PC-9 (cell line): ENCODE measurements at regions of chr2 and their contacts with region 1.

Region 1: DNA sequence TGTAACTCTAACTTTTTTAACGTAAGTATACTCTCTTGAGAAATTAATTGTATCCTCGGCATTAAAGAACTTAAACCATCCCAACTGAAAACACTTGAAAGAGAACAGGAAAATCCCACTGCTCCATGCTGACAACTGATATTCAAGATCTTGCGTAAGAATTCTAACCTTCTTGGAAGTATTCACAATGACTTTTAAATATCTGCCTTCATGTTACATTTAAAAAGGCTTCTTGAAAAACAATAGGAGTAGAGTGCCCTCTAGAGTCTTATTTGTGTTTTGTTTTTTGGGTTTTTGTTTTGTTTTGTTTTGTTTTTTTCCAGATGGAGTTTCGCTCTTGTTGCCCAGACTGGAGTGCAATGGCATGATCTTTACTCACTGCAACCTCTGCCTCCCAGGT is 65.4 kb upstream of the DNAJC10 start:
- DNase-seq: peak in 1 of 2 experiments; percentile 74
- H3K4me3 ChIP-seq: no peak overlapping the region
- H3K27ac ChIP-seq: no peak overlapping the region
- H3K4me1 ChIP-seq: no peaks in the 10 kb centered on the region
- H3K27me3 ChIP-seq: no peaks in the 10 kb centered on the region
- CTCF ChIP-seq: peak; percentile 85

Region 2: GRCh38 chr2:181104512-181105115 is 1546.1 kb before region 1 on chr2:
- CTCF ChIA-PET with region 1: no interaction called
- POLR2A ChIA-PET with region 1: no interaction called
- intact Hi-C with region 1: loop called (anchors 10 kb)
- DNase-seq: peak in 1 of 2 experiments; percentile 28
- H3K4me3 ChIP-seq: no peak overlapping the region
- H3K27ac ChIP-seq: no peak overlapping the region
- H3K4me1 ChIP-seq: peaks cover 27% of the 10 kb centered on the region
- H3K27me3 ChIP-seq: no peaks in the 10 kb centered on the region
- CTCF ChIP-seq: peak; percentile 90

Region 3: DNA sequence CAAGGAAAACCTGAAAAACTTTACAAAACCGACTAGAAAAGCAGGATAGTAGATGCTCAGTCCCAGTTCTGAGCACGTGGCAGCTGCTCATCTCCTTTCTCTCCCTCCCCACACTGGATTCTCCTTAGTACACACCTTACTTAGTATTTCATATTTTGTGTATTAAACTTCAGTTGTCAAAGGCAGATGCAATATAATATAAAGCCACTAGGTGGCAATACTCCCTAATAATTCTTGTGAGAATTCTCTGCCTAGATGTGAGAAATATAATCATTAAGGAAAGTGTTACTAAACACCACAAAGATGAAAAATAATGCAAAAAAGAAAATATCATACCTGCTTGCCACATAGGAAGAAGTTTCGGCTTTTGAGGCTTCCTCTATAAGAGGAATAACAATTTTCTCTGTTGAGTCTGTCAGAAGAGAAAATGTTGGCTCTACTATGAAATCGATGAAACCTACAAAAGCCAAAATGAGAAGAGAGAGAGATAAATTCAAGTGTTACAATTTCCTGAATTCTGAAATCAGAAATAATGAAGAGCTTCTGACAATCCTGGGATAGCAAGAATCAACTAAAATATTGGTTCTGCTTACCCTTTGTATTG is 464.5 kb before region 1 on chr2:
- CTCF ChIA-PET with region 1: interaction called, 15 read pairs
- POLR2A ChIA-PET with region 1: no interaction called
- intact Hi-C with region 1: loop called (anchors 1 kb)
- DNase-seq: peak in 1 of 2 experiments; percentile 56
- H3K4me3 ChIP-seq: no peak overlapping the region
- H3K27ac ChIP-seq: no peak overlapping the region
- H3K4me1 ChIP-seq: no peaks in the 10 kb centered on the region
- H3K27me3 ChIP-seq: no peaks in the 10 kb centered on the region
- CTCF ChIP-seq: peak; percentile 99

Region 4: GRCh38 chr2:182611009-182611408 is 39.7 kb before region 1 on chr2:
- CTCF ChIA-PET with region 1: interaction called, 17 read pairs
- POLR2A ChIA-PET with region 1: no interaction called
- intact Hi-C with region 1: no loop called
- DNase-seq: no peak
- H3K4me3 ChIP-seq: no peak overlapping the region
- H3K27ac ChIP-seq: no peak overlapping the region
- H3K4me1 ChIP-seq: no peaks in the 10 kb centered on the region
- H3K27me3 ChIP-seq: no peaks in the 10 kb centered on the region
- CTCF ChIP-seq: no peak

Region 5: DNA sequence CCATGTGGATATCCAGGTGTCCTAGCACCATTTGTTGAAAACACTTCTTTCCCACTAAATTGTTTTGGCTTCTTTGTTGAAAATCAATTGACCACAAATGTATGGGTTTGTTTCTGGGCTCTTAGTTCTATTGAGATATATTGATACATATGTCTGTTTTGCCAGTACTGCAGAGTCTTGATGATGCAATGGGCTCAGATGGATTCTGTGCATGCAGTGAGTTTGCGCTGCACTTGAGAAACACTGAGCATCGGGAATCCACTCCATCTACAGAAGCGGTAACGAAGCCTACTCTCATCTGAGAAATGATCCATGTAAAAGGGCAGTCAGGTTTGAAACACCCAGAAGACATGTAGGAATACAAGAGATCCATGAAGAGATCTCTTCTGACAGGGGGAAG is 43.5 kb after region 1 on chr2:
- CTCF ChIA-PET with region 1: no interaction called
- POLR2A ChIA-PET with region 1: no interaction called
- intact Hi-C with region 1: no loop called
- DNase-seq: no peak
- H3K4me3 ChIP-seq: no peak overlapping the region
- H3K27ac ChIP-seq: no peak overlapping the region
- H3K4me1 ChIP-seq: no peaks in the 10 kb centered on the region
- H3K27me3 ChIP-seq: no peaks in the 10 kb centered on the region
- CTCF ChIP-seq: no peak

Region 6: GRCh38 chr2:183214680-183215079 is 564.0 kb after region 1 on chr2:
- CTCF ChIA-PET with region 1: no interaction called
- POLR2A ChIA-PET with region 1: no interaction called
- intact Hi-C with region 1: no loop called
- DNase-seq: no peak
- H3K4me3 ChIP-seq: no peak overlapping the region
- H3K27ac ChIP-seq: no peak overlapping the region
- H3K4me1 ChIP-seq: no peaks in the 10 kb centered on the region
- H3K27me3 ChIP-seq: no peaks in the 10 kb centered on the region
- CTCF ChIP-seq: no peak